ENCODE measurements at regions of chr17 and their contacts with region 1.

Region 1: DNA sequence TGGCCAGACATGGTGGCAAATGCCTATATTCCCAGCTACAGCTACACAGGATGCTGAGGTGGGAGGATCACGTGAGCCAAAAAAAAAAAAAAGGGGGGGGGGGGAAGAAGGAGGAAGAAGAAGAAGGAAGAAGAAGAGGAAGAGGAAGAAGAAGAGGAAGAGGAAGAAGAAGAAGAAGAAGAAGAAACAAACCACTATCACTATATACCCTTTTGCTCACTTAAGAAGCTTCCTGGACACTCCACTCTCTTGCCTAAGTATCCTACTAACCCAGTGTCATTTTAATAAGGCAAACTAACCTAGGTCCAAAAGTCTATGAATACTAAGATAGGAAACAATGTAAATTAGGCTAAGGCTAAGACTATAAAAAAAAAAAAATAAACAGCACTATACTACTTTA is 54.8 kb downstream of the GPATCH8 start:
- DNase-seq: no peak
- H3K4me3 ChIP-seq: no peak overlapping the region
- H3K27ac ChIP-seq: no peak overlapping the region
- H3K4me1 ChIP-seq: no peaks in the 10 kb centered on the region
- H3K27me3 ChIP-seq: no peaks in the 10 kb centered on the region
- CTCF ChIP-seq: no peak

Region 2: DNA sequence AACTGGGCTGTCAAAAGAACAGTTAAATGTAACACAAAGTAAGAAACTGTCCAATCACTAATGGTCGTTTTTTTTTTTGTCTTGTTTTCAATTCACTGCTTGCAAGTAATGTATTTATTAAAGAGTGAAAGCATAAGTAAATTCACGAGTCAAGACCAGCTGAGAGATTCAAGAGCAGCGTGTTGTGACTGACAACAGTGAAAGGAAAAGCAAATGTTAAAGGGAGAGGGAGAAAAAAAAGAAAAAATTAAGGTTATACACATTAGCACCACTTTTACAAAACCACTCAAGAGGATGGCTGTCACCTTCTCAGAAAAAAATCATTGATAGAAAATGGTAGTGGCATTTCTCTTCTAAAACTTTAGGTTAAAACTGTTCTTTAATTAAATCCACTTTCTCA is 18.7 kb after region 1 on chr17:
- CTCF ChIA-PET with region 1: no interaction called
- POLR2A ChIA-PET with region 1: interaction called, 19 read pairs
- intact Hi-C with region 1: no loop called
- DNase-seq: no peak
- H3K4me3 ChIP-seq: no peak overlapping the region
- H3K27ac ChIP-seq: no peak overlapping the region
- H3K4me1 ChIP-seq: no peaks in the 10 kb centered on the region
- H3K27me3 ChIP-seq: no peaks in the 10 kb centered on the region
- CTCF ChIP-seq: no peak

Region 3: DNA sequence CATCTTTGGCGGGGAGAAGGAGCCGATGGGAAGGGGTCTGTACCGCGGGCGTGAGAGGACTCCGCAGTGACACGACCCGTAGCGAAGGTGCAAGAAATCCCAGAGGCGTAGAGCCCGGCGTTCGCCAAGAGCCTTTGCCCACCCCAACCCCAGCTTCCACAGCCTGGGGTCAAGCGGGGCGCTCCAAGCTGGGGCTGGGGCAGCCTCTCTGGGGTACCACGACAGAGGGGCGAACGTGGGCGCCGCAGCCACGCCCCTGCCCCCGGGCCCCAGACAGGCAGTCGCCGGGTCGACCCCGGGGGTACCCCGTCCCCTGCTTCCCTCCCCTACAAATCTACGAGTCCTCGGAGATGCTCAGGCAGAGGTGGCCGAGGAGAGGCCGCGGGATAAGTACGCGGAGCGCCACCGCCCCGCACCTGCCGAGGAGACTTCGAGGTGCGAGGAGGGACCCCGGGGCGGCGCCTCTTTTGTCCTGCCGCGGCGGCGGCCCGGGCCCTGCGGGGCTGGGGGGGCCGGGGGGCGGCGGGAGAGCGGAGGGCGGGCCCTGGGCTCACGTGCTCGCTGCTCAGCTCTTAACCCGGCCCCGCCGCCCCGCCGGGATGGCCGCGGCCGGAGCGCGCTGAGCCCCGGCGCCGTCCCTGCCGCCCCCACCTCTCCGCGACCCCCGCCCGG is 310.1 kb after region 1 on chr17 and contains the start of gene ADAM11:
- CTCF ChIA-PET with region 1: no interaction called
- POLR2A ChIA-PET with region 1: no interaction called
- intact Hi-C with region 1: no loop called
- DNase-seq: no peak
- H3K4me3 ChIP-seq: peak within 1 kb of the TSS; percentile 34
- H3K27ac ChIP-seq: no peak within 1 kb of the TSS
- H3K4me1 ChIP-seq: no peaks in the 10 kb centered on the region
- H3K27me3 ChIP-seq: no peaks in the 10 kb centered on the region
- CTCF ChIP-seq: no peak
- total RNA-seq, gene ADAM11: 0.17 and 0.59 TPM in 2 replicates

Region 4: DNA sequence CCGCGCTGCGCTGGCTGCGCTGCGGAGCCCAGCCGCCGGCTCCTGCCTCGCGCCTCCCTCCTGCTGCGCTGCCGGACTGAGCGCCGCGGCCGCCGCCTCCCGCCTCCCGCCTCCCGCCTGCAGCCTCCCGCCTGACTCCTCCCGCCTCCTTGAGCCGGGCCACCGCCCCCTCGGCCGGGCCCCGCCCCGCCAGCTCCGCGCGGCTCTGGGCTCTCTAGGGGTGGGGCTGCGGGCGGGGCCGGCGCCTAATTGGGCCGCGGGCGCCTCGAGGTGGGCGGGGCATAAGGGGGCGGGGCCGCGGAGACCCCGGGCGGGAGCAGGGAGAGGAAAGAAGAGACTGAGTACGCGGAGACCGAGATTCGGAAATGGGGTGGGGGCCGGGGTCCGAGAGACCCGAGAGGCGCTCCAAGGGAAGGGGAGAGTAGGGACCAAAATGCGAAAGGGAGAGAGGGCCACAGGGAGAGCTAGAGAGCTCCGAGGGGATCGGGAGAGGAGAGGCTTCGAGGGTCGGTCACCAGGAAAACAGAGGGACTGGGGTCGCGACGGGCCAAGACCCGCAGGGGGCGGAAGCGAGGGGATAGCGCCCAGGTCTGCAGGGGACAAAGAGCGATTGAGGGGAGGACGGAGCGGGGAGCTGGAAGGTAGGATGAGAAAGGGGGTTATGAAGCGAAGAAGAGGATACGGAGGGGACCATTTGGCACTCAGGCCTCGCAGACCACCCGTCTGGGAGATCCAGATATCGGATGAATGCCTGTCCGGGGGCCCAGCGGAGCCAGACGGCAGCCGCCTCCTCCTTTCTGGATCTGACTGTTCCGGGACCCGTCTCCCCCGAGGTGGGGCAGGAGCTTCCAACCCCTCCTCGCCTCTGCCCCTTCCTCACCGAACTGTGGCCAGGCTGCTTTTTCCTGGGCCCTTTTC is 520.1 kb after region 1 on chr17 and contains the start of gene C1QL1:
- CTCF ChIA-PET with region 1: no interaction called
- POLR2A ChIA-PET with region 1: no interaction called
- intact Hi-C with region 1: no loop called
- DNase-seq: peak; percentile 79
- H3K4me3 ChIP-seq: peak within 1 kb of the TSS; percentile 41
- H3K27ac ChIP-seq: no peak within 1 kb of the TSS
- H3K4me1 ChIP-seq: no peaks in the 10 kb centered on the region
- H3K27me3 ChIP-seq: no peaks in the 10 kb centered on the region
- CTCF ChIP-seq: no peak
- total RNA-seq, gene C1QL1: 8.6 and 10.8 TPM in 2 replicates

Measured in A673 (cell line).